Naive thymus-derived CD4-positive, alpha-beta T cell (primary cell): ENCODE measurements at regions of chr2 and their contacts with region 1.

Region 1: DNA sequence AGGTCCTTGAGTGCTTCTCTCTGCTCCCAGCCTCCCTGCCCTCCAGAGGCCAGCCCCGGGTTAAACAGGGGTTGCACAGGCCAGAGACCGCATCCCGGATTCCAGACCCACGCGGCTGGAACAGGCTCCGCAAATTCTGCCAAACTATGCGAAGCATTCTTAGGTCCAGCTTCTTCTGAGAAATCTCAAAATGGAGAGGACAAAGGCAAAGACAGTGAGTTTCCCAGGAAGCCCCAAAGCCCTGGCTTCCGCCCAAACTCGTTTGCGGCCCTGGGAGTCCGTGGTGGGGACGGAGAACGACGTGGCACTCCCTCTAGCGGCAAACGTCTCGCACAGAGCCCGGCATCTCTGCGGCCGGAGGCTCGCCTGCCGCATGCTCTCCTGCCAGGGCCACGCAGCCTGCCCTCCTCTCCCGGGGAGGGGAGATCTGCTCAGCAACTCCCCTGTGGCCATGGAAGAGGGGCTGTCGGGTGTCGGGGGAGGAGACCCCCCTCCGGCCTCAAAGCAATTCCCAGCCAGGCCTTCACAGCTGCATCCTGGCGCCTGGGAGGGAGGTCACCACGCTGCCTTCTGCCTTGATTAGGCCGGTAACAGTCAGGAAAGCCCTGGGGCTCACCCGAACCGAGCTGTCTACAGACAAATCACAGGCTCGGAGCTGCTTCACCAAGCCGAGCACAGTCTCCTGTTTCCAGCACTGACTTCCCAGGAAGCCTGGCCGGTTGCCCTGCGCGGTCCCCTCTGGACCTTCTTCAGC is 33.4 kb upstream of the KLHL29 start:
- DNase-seq: peak in 8 of 9 donors; percentile 17 to 62 (median 40)
- ATAC-seq: peak; percentile 70
- H3K4me3 ChIP-seq: no peak overlapping the region
- H3K4me3 Mint-ChIP-seq: peak overlapping the region in 2 of 10 donors; percentile 48 to 50
- H3K27ac ChIP-seq: no peak overlapping the region
- H3K27ac Mint-ChIP-seq: no peak overlapping the region
- H3K4me1 ChIP-seq: no peaks in the 10 kb centered on the region
- H3K4me1 Mint-ChIP-seq: peaks cover 0 to 3% (median 0%) of the 10 kb centered on the region in 7 donors
- H3K27me3 ChIP-seq: no peaks in the 10 kb centered on the region
- H3K27me3 Mint-ChIP-seq: peaks cover 23 to 39% (median 35%) of the 10 kb centered on the region in 5 donors

Region 2: DNA sequence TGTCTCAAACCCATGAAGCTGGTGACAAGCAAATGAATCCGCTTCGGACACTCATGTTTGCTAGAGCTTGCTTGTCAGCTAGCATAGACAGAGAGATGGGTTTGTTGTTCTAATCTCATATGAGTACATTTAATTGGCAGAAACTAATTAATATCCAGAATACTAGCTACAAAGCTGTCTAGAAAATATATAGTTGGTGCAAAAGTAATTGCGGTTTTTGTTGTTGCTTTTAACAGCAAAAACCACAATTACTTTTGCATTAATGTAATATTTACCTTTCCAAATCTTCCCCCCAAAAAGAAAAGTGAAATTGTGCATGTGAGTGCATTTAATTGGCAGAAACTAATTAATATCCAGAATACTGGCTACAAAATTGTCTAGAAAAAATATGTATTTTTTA is 1112.6 kb before region 1 on chr2:
- CTCF ChIA-PET with region 1: no interaction called
- POLR2A ChIA-PET with region 1: no interaction called
- intact Hi-C with region 1: no loop called
- DNase-seq: no peak
- ATAC-seq: no peak
- H3K4me3 ChIP-seq: no peak overlapping the region
- H3K4me3 Mint-ChIP-seq: no peak overlapping the region
- H3K27ac ChIP-seq: no peak overlapping the region
- H3K27ac Mint-ChIP-seq: no peak overlapping the region
- H3K4me1 ChIP-seq: no peaks in the 10 kb centered on the region
- H3K4me1 Mint-ChIP-seq: no peaks in the 10 kb centered on the region
- H3K27me3 ChIP-seq: no peaks in the 10 kb centered on the region
- H3K27me3 Mint-ChIP-seq: no peaks in the 10 kb centered on the region

Region 3: DNA sequence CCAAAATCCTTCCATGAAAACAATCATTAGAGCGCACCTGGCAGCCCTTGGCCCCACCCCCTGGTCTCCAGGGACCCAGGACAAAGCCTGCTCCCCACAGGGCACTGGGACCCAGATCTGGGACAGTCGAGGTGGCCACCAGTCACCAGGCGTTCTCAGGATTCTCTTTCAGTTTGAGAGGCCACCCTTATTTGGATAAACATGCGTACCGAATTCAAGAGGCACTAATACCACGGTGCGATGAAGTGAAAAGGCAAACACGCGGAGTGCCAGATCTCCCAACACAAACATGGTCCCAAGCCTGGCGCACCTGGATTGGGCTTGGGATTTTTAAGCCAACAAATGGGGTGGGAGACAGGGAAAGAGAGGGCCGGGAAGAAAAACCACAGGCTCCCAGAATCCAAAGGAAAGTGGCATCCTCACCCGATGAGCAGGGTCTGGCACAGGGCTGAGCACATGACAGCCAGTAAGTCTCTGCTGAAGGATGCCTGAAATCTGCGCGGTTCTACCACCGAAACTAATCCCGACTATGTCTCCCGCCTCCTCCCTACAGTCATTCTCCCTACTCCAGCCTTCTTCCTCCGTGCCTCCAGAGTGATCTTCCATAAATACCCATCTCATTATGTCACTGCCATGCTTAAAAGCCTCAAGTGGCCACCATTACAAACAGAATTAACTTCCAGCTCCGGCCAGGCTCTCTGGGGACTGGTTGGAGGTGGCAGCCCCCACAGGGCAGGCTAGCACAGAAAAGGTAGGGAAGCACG is 27.5 kb before region 1 on chr2:
- CTCF ChIA-PET with region 1: no interaction called
- POLR2A ChIA-PET with region 1: no interaction called
- intact Hi-C with region 1: no loop called
- DNase-seq: no peak
- ATAC-seq: no peak
- H3K4me3 ChIP-seq: no peak overlapping the region
- H3K4me3 Mint-ChIP-seq: no peak overlapping the region
- H3K27ac ChIP-seq: no peak overlapping the region
- H3K27ac Mint-ChIP-seq: no peak overlapping the region
- H3K4me1 ChIP-seq: no peaks in the 10 kb centered on the region
- H3K4me1 Mint-ChIP-seq: peaks cover 0 to 2% (median 0%) of the 10 kb centered on the region in 7 donors
- H3K27me3 ChIP-seq: peaks cover 0 to 6% of the 10 kb centered on the region in 2 donors
- H3K27me3 Mint-ChIP-seq: peaks cover 26 to 45% (median 33%) of the 10 kb centered on the region in 5 donors

Region 4: DNA sequence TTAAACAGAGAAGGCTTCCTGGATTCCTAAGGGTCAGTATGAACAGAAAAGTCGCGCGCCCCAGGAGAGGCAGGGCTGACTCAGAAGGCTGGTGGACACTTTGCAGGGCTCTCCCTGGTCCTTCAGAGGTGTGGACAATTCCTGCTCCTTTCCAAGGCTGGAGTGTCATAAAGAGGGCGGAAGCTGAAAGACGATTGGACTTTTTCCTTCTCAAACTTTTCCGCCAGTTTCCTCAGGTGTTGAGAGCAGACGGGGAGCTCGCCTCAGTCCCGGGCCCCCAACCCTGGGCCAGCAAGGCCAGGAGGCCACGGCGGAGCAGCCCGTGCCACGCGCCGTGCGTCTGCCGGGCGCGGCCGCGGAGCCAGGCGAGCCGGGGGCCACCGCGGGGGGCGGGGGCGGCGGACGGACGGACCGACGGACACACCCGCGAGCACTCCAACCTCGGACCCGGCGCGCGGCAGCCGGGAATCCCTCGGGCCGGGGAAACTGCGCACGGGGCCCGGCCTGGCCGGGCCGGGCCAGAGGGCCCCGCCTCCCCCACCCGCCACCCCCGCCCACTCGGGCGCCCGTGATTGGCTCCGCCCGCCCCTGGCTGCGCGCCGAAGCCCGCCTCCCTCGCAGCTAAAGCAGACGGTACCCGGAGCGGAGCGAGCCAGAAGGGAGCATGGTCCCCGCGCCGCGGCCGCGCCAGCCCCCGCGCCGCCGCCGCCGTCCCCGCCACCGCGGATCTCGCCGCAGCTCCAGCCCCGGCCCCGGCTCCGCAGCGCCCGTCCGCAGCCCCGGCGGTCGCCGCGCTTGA is 33.2 kb after region 1 on chr2 and contains the start of gene KLHL29:
- CTCF ChIA-PET with region 1: no interaction called
- POLR2A ChIA-PET with region 1: no interaction called
- intact Hi-C with region 1: loop called in 1 of 2 experiments (anchors 1 kb)
- DNase-seq: peak; percentile 56 to 79 (median 72)
- ATAC-seq: peak; percentile 88
- H3K4me3 ChIP-seq: peak within 1 kb of the TSS; percentile 46
- H3K4me3 Mint-ChIP-seq: peak within 1 kb of the TSS; percentile 85 to 97 (median 90)
- H3K27ac ChIP-seq: no peak within 1 kb of the TSS
- H3K27ac Mint-ChIP-seq: peak within 1 kb of the TSS in 8 of 9 donors; percentile 76 to 96 (median 84)
- H3K4me1 ChIP-seq: peaks cover 0 to 24% of the 10 kb centered on the region in 2 donors
- H3K4me1 Mint-ChIP-seq: peaks cover 17 to 41% (median 35%) of the 10 kb centered on the region in 7 donors
- H3K27me3 ChIP-seq: peaks cover 0 to 2% of the 10 kb centered on the region in 2 donors
- H3K27me3 Mint-ChIP-seq: peaks cover 23 to 77% (median 40%) of the 10 kb centered on the region in 5 donors
- total RNA-seq, gene KLHL29: 5.4 to 6.5 (median 6.2) TPM

Region 5: GRCh38 chr2:23404426-23404825 is 52.9 kb after region 1 on chr2:
- CTCF ChIA-PET with region 1: no interaction called
- POLR2A ChIA-PET with region 1: no interaction called
- intact Hi-C with region 1: loop called in 1 of 2 experiments (anchors 5 kb)
- DNase-seq: peak in 6 of 9 donors; percentile 23 to 41 (median 36)
- ATAC-seq: peak; percentile 53
- H3K4me3 ChIP-seq: no peak overlapping the region
- H3K4me3 Mint-ChIP-seq: peak overlapping the region in 7 of 10 donors; percentile 11 to 62 (median 52)
- H3K27ac ChIP-seq: no peak overlapping the region
- H3K27ac Mint-ChIP-seq: peak overlapping the region in 6 of 9 donors; percentile 5 to 92 (median 63)
- H3K4me1 ChIP-seq: peaks cover 0 to 9% of the 10 kb centered on the region in 2 donors
- H3K4me1 Mint-ChIP-seq: peaks cover 3 to 21% (median 17%) of the 10 kb centered on the region in 7 donors
- H3K27me3 ChIP-seq: no peaks in the 10 kb centered on the region
- H3K27me3 Mint-ChIP-seq: peaks cover 0 to 5% (median 0%) of the 10 kb centered on the region in 5 donors